Activated CD4-positive, alpha-beta memory T cell treated with anti-CD3 and anti-CD28 coated beads for 36 hours (primary cell): ENCODE measurements at regions of chr16 and their contacts with region 1.

Region 1: GRCh38 chr16:53537626-53538025 is 34.6 kb upstream of the AKTIP start:
- DNase-seq: no peak
- H3K4me3 Mint-ChIP-seq: no peak overlapping the region
- H3K27ac Mint-ChIP-seq: no peak overlapping the region
- H3K4me1 Mint-ChIP-seq: peaks cover 28% of the 10 kb centered on the region
- H3K27me3 Mint-ChIP-seq: no peaks in the 10 kb centered on the region

Region 2: GRCh38 chr16:53323924-53324323 is 213.7 kb before region 1 on chr16:
- CTCF ChIA-PET with region 1: no interaction called
- POLR2A ChIA-PET with region 1: no interaction called
- intact Hi-C with region 1: no loop called
- DNase-seq: no peak
- H3K4me3 Mint-ChIP-seq: no peak overlapping the region
- H3K27ac Mint-ChIP-seq: no peak overlapping the region
- H3K4me1 Mint-ChIP-seq: no peaks in the 10 kb centered on the region
- H3K27me3 Mint-ChIP-seq: no peaks in the 10 kb centered on the region

Region 3: GRCh38 chr16:53518550-53519416 is 18.8 kb before region 1 on chr16:
- CTCF ChIA-PET with region 1: interaction called, 3 read pairs
- POLR2A ChIA-PET with region 1: interaction called, 15 read pairs
- intact Hi-C with region 1: loop called (anchors 1 kb)
- DNase-seq: peak; percentile 92
- H3K4me3 Mint-ChIP-seq: peak overlapping the region; percentile 73
- H3K27ac Mint-ChIP-seq: peak overlapping the region; percentile 84
- H3K4me1 Mint-ChIP-seq: peaks cover 46% of the 10 kb centered on the region
- H3K27me3 Mint-ChIP-seq: no peaks in the 10 kb centered on the region

Region 4: GRCh38 chr16:53703590-53704444 is 166.2 kb after region 1 on chr16 and contains the starts of genes FTO and RPGRIP1L:
- CTCF ChIA-PET with region 1: no interaction called
- POLR2A ChIA-PET with region 1: interaction called, 3 read pairs
- intact Hi-C with region 1: loop called (anchors 5 kb)
- DNase-seq: peak; percentile 99
- H3K4me3 Mint-ChIP-seq: peak within 1 kb of the TSS; percentile 99
- H3K27ac Mint-ChIP-seq: peak within 1 kb of the TSS; percentile 91
- H3K4me1 Mint-ChIP-seq: peaks cover 34% of the 10 kb centered on the region
- H3K27me3 Mint-ChIP-seq: no peaks in the 10 kb centered on the region
- total RNA-seq, gene FTO: 50.7 to 53.1 TPM
- total RNA-seq, gene RPGRIP1L: 6.2 to 6.5 TPM

Region 5: GRCh38 chr16:53822936-53823529 is 285.4 kb after region 1 on chr16:
- CTCF ChIA-PET with region 1: no interaction called
- POLR2A ChIA-PET with region 1: no interaction called
- intact Hi-C with region 1: loop called (anchors 5 kb)
- DNase-seq: peak; percentile 27
- H3K4me3 Mint-ChIP-seq: no peak overlapping the region
- H3K27ac Mint-ChIP-seq: no peak overlapping the region
- H3K4me1 Mint-ChIP-seq: peaks cover 19% of the 10 kb centered on the region
- H3K27me3 Mint-ChIP-seq: no peaks in the 10 kb centered on the region

Region 6: DNA sequence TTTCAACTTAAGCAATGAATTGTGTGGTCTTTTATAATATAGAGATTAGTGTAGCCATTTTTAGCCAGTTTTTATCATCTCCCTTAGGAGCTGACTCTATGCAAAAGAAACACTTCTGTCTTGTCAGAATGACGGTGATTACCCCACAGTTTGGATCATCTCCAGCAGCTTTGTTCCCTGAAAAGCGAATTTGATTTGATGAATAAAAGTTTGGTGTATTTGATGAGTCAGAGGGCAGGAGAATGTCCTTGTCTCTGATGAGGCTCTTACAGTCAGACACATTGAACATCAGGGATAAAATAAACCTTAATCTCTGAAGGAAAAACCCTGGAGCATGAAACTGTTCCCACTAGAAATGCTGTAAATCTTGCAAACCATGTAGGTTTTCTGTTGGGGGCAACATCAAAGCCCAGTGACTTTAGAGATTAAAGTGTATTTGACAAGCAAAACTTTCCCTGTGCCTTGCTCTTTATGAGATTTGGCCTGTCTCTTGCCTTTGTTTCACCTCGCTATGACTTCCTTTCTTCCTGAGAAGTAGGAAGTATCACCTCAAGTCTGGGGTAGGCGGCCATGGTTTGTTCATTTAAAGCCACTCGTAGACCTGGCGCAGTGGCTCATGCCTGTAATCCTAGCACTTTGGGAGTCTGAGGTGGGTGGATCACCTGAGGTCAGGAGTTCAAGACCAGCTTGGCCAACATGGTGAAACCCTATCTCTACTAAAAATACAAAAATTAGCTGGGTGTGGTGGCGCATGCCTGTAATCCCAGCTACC is 375.7 kb after region 1 on chr16:
- CTCF ChIA-PET with region 1: no interaction called
- POLR2A ChIA-PET with region 1: no interaction called
- intact Hi-C with region 1: loop called (anchors 5 kb)
- DNase-seq: peak; percentile 50
- H3K4me3 Mint-ChIP-seq: no peak overlapping the region
- H3K27ac Mint-ChIP-seq: peak overlapping the region; percentile 79
- H3K4me1 Mint-ChIP-seq: peaks cover 7% of the 10 kb centered on the region
- H3K27me3 Mint-ChIP-seq: no peaks in the 10 kb centered on the region